Endothelial cell of umbilical vein (primary cell): ENCODE measurements at regions of chr18 and their contacts with region 1.

Region 1: DNA sequence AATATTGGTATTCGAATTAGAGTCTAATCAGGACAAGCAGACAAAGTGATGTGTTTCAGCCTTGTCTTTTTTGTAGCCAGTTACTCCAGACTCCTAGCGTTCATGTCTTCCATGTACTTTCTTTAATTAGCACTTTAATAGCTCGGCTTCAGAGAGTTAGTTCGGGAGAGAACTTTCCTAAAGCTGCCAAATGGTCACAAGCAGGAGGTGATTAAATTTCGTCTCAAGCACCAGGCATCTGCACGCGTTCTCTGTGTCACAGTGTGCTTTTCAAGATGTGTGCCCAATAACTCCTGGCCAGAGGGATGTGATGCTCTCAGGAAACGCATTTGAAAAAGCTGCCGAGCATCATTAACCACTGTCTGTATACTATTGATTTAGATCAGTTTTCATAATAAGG is 790.8 kb downstream of the SOCS6 start:
- DNase-seq: no peak
- H3K4me3 ChIP-seq: no peak overlapping the region
- H3K27ac ChIP-seq: no peak overlapping the region
- H3K4me1 ChIP-seq: no peaks in the 10 kb centered on the region
- H3K27me3 ChIP-seq: no peaks in the 10 kb centered on the region
- CTCF ChIP-seq: no peak
- POLR2A ChIP-seq: no peak

Region 2: DNA sequence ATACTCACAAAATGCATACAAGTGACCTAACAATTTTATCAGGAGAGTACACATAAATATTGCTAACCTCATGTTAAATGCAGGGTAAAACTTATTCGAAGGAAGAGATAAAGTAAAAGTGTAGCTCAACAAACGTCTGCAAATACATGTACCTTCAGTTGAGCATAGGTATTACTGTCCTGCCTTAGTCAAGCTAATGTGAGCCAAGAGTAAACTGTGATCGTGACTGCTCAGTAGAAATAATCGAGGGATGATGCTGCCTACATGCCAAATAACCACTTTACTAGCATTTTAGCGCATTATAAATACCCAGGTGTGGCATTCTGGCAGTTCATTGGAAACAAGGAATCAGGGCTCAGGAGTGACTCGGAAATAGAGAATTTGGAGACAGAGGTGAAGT is 11.3 kb before region 1 on chr18:
- CTCF ChIA-PET with region 1: interaction called, 12 read pairs
- POLR2A ChIA-PET with region 1: no interaction called
- dilution Hi-C with region 1: no loop called
- intact Hi-C with region 1: no loop called
- DNase-seq: peak; percentile 28
- H3K4me3 ChIP-seq: no peak overlapping the region
- H3K27ac ChIP-seq: no peak overlapping the region
- H3K4me1 ChIP-seq: peaks cover 5% of the 10 kb centered on the region
- H3K27me3 ChIP-seq: no peaks in the 10 kb centered on the region
- CTCF ChIP-seq: no peak
- POLR2A ChIP-seq: no peak